Activated CD8-positive, alpha-beta T cell treated with anti-CD3 and anti-CD28 coated beads for 36 hours (primary cell): ENCODE measurements at regions of chr12 and their contacts with region 1.

Region 1: GRCh38 chr12:65217086-65217485 is 47.7 kb downstream of the LEMD3 start:
- DNase-seq: no peak
- ATAC-seq: no peak
- H3K4me3 Mint-ChIP-seq: no peak overlapping the region
- H3K27ac Mint-ChIP-seq: no peak overlapping the region
- H3K4me1 Mint-ChIP-seq: peaks cover 15% of the 10 kb centered on the region
- H3K27me3 Mint-ChIP-seq: no peaks in the 10 kb centered on the region
- CTCF ChIP-seq: no peak

Region 2: DNA sequence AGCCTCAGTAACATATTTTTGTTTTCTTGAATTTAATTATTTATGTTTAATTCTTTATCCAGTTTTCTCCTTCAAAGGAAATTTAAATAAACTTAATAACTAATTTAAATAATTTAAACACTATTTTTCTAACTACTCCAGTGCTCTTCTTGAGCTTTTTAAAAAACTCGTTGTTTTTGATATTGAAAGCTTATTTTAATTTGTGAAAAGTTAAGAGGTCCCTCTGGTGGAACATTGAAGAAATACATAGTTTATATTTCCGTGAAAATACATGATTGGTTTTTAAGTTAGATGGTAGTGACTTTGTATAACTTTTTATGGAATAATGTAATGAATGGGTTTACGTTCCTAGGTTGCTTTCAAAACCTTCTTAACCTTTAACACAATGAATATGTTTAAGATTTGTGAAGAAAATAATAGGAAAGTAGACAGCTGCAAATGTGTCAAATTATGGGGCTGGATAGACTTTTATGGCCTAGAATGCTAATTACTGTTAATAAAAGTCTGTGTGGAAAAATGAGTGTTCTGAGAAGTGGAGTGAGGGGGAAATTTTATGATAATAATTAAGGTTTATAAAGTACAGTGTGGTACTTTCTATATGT is 15.5 kb after region 1 on chr12:
- CTCF ChIA-PET with region 1: interaction called, 16 read pairs
- POLR2A ChIA-PET with region 1: no interaction called
- intact Hi-C with region 1: no loop called
- DNase-seq: no peak
- ATAC-seq: no peak
- H3K4me3 Mint-ChIP-seq: no peak overlapping the region
- H3K27ac Mint-ChIP-seq: no peak overlapping the region
- H3K4me1 Mint-ChIP-seq: peaks cover 10% of the 10 kb centered on the region
- H3K27me3 Mint-ChIP-seq: no peaks in the 10 kb centered on the region
- CTCF ChIP-seq: peak; percentile 63